ENCODE measurements at regions of chr10 and their contacts with region 1.

Region 1: DNA sequence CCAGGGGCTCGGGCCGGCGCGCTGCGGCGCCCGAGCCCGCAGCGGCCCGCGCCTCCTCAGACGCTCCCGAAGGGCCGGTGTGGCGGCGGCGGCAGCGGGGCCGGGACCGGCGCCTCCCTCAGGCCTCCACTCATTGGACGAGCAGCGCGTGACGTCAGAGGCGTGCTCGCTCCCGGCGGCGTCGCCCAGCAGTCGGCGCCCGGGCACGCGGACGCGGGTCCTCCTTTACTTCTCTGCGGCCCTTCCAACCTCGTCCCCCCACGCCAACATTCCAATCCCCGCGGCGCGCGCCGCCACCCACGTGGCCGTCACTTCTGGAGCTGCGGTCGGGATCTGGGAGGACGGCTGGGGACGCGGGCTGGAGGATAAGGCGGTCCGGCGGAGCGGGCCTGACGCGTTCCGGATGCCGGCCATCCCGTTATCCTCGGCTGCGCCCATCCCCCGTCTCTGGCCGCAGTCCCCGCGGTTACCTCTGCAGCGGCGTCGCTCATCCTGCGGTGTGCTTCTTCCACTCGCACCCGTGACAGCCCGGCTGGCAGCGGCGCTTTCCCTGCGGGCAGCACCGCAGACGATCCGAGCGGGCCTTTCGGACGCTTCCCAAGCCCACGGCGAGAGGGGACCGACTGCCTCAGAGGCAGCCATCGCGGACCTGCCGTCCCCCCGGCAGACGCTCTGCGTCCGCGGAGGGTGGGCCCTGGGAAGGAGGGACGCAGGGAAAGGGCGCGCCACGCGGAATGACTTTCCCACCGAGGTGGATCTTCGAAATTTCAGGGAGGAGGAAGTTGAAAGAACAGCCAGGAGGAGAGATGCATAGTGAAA is at the start of gene PDZD8:
- DNase-seq: peak; percentile 81 to 96 (median 92)
- ATAC-seq: peak; percentile 78
- H3K4me3 ChIP-seq: peak within 1 kb of the TSS; percentile 94
- H3K4me3 Mint-ChIP-seq: peak within 1 kb of the TSS; percentile 95
- H3K27ac ChIP-seq: peak within 1 kb of the TSS; percentile 55 to 59
- H3K27ac Mint-ChIP-seq: peak within 1 kb of the TSS; percentile 88
- H3K4me1 ChIP-seq: peaks cover 38% of the 10 kb centered on the region
- H3K4me1 Mint-ChIP-seq: peaks cover 40% of the 10 kb centered on the region
- H3K27me3 ChIP-seq: peaks cover 0 to 3% of the 10 kb centered on the region in 2 experiments
- H3K27me3 Mint-ChIP-seq: peaks cover 28% of the 10 kb centered on the region
- CTCF ChIP-seq: no peak
- total RNA-seq, gene PDZD8: 25.2 to 31.1 TPM

Region 2: DNA sequence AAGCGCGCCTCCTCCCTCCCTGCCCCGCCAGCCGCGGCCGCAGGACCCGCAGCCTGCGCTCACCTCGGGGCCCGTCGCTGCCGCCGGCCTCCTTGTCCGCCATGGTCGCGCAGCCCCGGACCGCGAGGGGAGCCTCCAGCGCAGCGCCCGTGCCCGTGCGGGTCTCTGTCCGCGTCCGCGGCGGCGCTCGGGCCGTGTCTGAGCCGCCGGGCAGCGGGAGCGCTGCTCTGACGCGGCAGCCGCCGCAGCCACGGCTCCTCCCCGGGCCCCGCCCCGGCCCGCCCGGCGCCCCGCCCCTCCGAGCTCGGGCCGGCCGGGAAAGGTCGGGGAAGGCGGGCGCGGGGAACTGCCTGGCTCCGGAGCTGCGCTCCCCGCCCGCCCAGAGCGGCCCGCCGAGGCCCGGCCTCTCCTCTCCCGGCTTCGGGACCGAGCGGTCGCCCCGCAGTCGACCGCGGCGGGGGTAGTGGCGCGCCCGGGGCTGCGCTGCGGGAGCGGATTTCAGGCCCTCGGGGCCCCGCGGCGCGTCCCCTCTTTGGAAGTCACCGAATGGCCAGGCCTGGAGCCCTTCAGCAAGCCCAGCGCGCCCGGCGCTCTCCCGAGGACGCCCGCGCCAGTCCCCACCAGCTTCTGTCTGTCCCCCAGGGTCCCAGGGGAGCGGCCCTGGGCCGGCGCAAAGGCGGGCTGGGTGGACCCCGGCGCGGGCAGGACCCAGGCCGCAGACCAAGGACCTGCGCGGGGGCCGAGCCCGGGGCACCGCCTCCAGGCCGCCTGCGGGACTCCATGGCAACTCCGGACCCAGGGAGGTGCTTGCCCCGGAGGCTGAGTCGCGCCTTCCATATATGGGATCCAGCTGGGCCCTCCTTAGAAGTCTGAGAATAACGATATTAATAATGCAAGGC is 633.0 kb before region 1 on chr10 and contains the start of gene HSPA12A:
- CTCF ChIA-PET with region 1: no interaction called
- POLR2A ChIA-PET with region 1: no interaction called
- intact Hi-C with region 1: loop called in 1 of 2 experiments (anchors 10 kb)
- DNase-seq: peak in 9 of 14 experiments; percentile 20 to 68 (median 48)
- ATAC-seq: peak; percentile 78
- H3K4me3 ChIP-seq: peak within 1 kb of the TSS; percentile 26
- H3K4me3 Mint-ChIP-seq: peak within 1 kb of the TSS; percentile 80
- H3K27ac ChIP-seq: no peak within 1 kb of the TSS
- H3K27ac Mint-ChIP-seq: no peak within 1 kb of the TSS
- H3K4me1 ChIP-seq: peaks cover 17% of the 10 kb centered on the region
- H3K4me1 Mint-ChIP-seq: peaks cover 5% of the 10 kb centered on the region
- H3K27me3 ChIP-seq: peaks cover 51 to 89% of the 10 kb centered on the region in 2 experiments
- H3K27me3 Mint-ChIP-seq: peaks cover 82% of the 10 kb centered on the region
- CTCF ChIP-seq: no peak
- total RNA-seq, gene HSPA12A: 0.49 TPM in 1 of 2 experiments, not detected in the other

Region 3: GRCh38 chr10:116796910-116797513 is 578.6 kb before region 1 on chr10:
- CTCF ChIA-PET with region 1: no interaction called
- POLR2A ChIA-PET with region 1: no interaction called
- intact Hi-C with region 1: loop called in 1 of 2 experiments (anchors 5 kb)
- DNase-seq: peak; percentile 41 to 79 (median 54)
- ATAC-seq: peak; percentile 75
- H3K4me3 ChIP-seq: no peak overlapping the region
- H3K4me3 Mint-ChIP-seq: no peak overlapping the region
- H3K27ac ChIP-seq: no peak overlapping the region
- H3K27ac Mint-ChIP-seq: no peak overlapping the region
- H3K4me1 ChIP-seq: no peaks in the 10 kb centered on the region
- H3K4me1 Mint-ChIP-seq: no peaks in the 10 kb centered on the region
- H3K27me3 ChIP-seq: peaks cover 0 to 7% of the 10 kb centered on the region in 2 experiments
- H3K27me3 Mint-ChIP-seq: peaks cover 55% of the 10 kb centered on the region
- CTCF ChIP-seq: peak; percentile 69

Region 4: GRCh38 chr10:117653170-117653515 is 277.6 kb after region 1 on chr10:
- CTCF ChIA-PET with region 1: no interaction called
- POLR2A ChIA-PET with region 1: no interaction called
- intact Hi-C with region 1: no loop called
- DNase-seq: peak in 1 of 14 experiments; percentile 28
- ATAC-seq: no peak
- H3K4me3 ChIP-seq: no peak overlapping the region
- H3K4me3 Mint-ChIP-seq: no peak overlapping the region
- H3K27ac ChIP-seq: no peak overlapping the region
- H3K27ac Mint-ChIP-seq: no peak overlapping the region
- H3K4me1 ChIP-seq: no peaks in the 10 kb centered on the region
- H3K4me1 Mint-ChIP-seq: no peaks in the 10 kb centered on the region
- H3K27me3 ChIP-seq: no peaks in the 10 kb centered on the region
- H3K27me3 Mint-ChIP-seq: no peaks in the 10 kb centered on the region
- CTCF ChIP-seq: no peak

Region 5: GRCh38 chr10:118046395-118047156 is 671.0 kb after region 1 on chr10 and contains the start of gene RAB11FIP2:
- CTCF ChIA-PET with region 1: no interaction called
- POLR2A ChIA-PET with region 1: no interaction called
- intact Hi-C with region 1: loop called in 1 of 2 experiments (anchors 5 kb)
- DNase-seq: peak; percentile 91 to 98 (median 95)
- ATAC-seq: peak; percentile 93
- H3K4me3 ChIP-seq: peak within 1 kb of the TSS; percentile 79
- H3K4me3 Mint-ChIP-seq: peak within 1 kb of the TSS; percentile 94
- H3K27ac ChIP-seq: peak within 1 kb of the TSS in 1 of 2 donors; percentile 60
- H3K27ac Mint-ChIP-seq: peak within 1 kb of the TSS; percentile 79
- H3K4me1 ChIP-seq: peaks cover 13% of the 10 kb centered on the region
- H3K4me1 Mint-ChIP-seq: peaks cover 51% of the 10 kb centered on the region
- H3K27me3 ChIP-seq: no peaks in the 10 kb centered on the region
- H3K27me3 Mint-ChIP-seq: no peaks in the 10 kb centered on the region
- CTCF ChIP-seq: no peak
- total RNA-seq, gene RAB11FIP2: 35.6 to 37.7 TPM

Measured in CD4-positive, alpha-beta T cell (primary cell).